Activated CD4-positive, alpha-beta memory T cell treated with anti-CD3 and anti-CD28 coated beads for 36 hours (primary cell): ENCODE measurements at regions of chr12 and their contacts with region 1.

Region 1: GRCh38 chr12:38316391-38317129 is at the start of gene ALG10B:
- DNase-seq: peak; percentile 95
- H3K4me3 Mint-ChIP-seq: peak within 1 kb of the TSS; percentile 95
- H3K27ac Mint-ChIP-seq: peak within 1 kb of the TSS; percentile 91
- H3K4me1 Mint-ChIP-seq: peaks cover 15% of the 10 kb centered on the region
- H3K27me3 Mint-ChIP-seq: no peaks in the 10 kb centered on the region
- total RNA-seq, gene ALG10B: 11.8 to 14.0 TPM

Region 2: GRCh38 chr12:37672655-37673260 is 643.8 kb before region 1 on chr12:
- CTCF ChIA-PET with region 1: no interaction called
- POLR2A ChIA-PET with region 1: no interaction called
- intact Hi-C with region 1: loop called (anchors 2 kb)
- DNase-seq: no peak
- H3K4me3 Mint-ChIP-seq: no peak overlapping the region
- H3K27ac Mint-ChIP-seq: no peak overlapping the region
- H3K4me1 Mint-ChIP-seq: no peaks in the 10 kb centered on the region
- H3K27me3 Mint-ChIP-seq: no peaks in the 10 kb centered on the region

Region 3: GRCh38 chr12:38138225-38139221 is 178.0 kb before region 1 on chr12:
- CTCF ChIA-PET with region 1: interaction called, 7 read pairs
- POLR2A ChIA-PET with region 1: no interaction called
- intact Hi-C with region 1: loop called (anchors 1 kb)
- DNase-seq: peak; percentile 65
- H3K4me3 Mint-ChIP-seq: peak overlapping the region; percentile 59
- H3K27ac Mint-ChIP-seq: no peak overlapping the region
- H3K4me1 Mint-ChIP-seq: peaks cover 6% of the 10 kb centered on the region
- H3K27me3 Mint-ChIP-seq: no peaks in the 10 kb centered on the region